ENCODE measurements at regions of chr12 and their contacts with region 1.

Region 1: DNA sequence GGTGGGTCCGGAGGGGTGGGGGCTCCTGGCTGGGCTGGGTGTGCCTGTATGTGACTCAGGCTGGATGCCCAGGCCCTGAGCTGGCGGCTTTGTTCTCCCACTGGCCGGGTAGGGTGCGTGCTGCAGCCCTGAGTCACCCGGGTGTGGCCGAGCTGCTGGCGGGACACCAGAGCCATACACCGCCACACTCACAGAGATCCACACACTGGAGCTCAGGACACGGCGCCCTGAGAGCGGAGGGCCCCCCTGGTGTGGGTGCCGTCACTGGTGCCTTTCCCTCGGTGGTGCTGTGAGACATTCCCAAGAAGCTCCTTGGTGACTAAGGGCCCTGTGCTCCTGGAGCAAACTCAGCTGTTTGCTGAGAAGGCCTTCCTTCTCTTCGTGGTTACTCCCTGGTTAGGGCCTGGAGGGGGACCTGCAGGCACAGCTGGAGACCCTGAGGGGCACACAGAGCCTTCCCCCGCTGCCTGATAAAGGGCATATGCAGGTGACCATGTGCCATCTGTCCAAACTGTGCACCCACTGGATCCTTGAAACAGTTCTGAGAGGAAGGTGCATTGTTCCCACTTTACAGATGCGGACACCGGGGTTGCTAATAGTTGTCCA is 44.3 kb downstream of the KRT80 start:
- DNase-seq: peak; percentile 99
- ATAC-seq: peak; percentile 57
- H3K4me3 ChIP-seq: no peak overlapping the region
- H3K27ac ChIP-seq: peak overlapping the region; percentile 100
- H3K4me1 ChIP-seq: peaks cover 78% of the 10 kb centered on the region
- H3K27me3 ChIP-seq: no peaks in the 10 kb centered on the region
- CTCF ChIP-seq: no peak

Region 2: DNA sequence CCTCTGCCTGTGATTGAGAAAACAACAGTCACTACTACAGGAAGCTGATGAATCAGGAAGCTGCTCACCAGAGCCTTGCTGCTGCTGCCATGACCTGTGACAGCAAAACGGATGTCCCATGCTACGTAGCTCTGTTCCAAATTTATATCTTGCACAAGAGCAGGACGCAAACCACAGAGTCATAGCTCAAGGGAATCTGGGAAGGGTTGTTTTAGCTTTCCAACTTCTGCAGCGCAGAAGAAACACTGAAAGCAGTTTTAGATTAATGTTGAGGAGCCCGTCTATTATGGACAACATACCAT is 261.5 kb before region 1 on chr12:
- CTCF ChIA-PET with region 1: no interaction called
- POLR2A ChIA-PET with region 1: no interaction called
- intact Hi-C with region 1: no loop called
- DNase-seq: peak; percentile 83
- ATAC-seq: peak; percentile 95
- H3K4me3 ChIP-seq: no peak overlapping the region
- H3K27ac ChIP-seq: peak overlapping the region; percentile 34
- H3K4me1 ChIP-seq: peaks cover 7% of the 10 kb centered on the region; the same call in 1 of the 2 replicates
- H3K27me3 ChIP-seq: no peaks in the 10 kb centered on the region
- CTCF ChIP-seq: no peak

Region 3: DNA sequence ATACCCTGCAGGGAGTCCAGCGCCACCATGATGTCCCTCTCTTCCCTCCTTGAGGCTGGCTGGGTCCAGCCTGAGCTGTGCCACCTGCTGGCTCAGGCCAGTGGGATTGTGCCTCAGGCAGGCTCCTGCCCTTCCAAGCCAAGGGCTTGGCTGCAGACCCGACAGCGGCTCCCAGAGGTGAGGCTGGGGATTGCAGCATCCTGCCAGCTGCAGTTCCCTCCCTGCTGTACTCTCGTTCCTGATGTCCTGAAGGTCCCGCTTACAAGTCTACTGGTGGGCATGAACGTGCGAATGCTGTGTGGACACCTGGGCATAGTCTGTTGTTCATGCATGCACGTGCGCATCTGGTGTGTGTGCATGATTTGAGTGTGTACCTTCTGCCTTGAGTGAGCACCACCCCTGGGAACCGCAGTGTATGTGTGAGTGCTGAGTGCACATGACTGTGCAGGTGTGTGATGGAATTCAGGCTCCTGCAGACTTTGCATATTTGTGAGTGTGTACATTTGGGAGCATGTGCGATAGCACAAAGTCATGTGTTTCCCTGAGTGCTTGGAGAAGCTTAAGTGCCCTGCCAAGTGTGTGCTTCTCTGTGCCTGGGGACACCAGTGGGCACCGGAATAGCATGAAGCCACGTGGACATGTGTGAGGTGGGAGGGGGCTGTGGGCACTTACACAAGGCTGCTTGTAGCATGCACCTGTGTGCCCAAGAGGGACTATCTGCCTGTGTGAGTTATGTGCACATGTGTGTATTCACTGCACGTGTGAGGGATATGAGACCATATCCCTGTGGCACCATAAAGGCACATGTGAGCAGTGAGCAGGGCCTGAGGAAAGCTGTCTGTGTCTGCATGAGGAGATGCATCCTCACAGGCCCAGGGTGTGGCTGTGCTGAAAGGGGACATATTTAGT is 66.3 kb after region 1 on chr12:
- CTCF ChIA-PET with region 1: no interaction called
- POLR2A ChIA-PET with region 1: interaction called, 12 read pairs
- intact Hi-C with region 1: no loop called
- DNase-seq: peak; percentile 96
- ATAC-seq: peak; percentile 56
- H3K4me3 ChIP-seq: no peak overlapping the region
- H3K27ac ChIP-seq: peak overlapping the region; percentile 72
- H3K4me1 ChIP-seq: peaks cover 61% of the 10 kb centered on the region
- H3K27me3 ChIP-seq: no peaks in the 10 kb centered on the region
- CTCF ChIP-seq: peak; percentile 99

Region 4: GRCh38 chr12:52442600-52443061 is 295.2 kb after region 1 on chr12:
- CTCF ChIA-PET with region 1: no interaction called
- POLR2A ChIA-PET with region 1: no interaction called
- intact Hi-C with region 1: loop called (anchors 5 kb)
- DNase-seq: peak; percentile 99
- ATAC-seq: peak; percentile 64
- H3K4me3 ChIP-seq: peak overlapping the region; percentile 11; the same call in 1 of the 2 replicates
- H3K27ac ChIP-seq: peak overlapping the region; percentile 95
- H3K4me1 ChIP-seq: peaks cover 72% of the 10 kb centered on the region
- H3K27me3 ChIP-seq: no peaks in the 10 kb centered on the region
- CTCF ChIP-seq: peak; percentile 56

Region 5: DNA sequence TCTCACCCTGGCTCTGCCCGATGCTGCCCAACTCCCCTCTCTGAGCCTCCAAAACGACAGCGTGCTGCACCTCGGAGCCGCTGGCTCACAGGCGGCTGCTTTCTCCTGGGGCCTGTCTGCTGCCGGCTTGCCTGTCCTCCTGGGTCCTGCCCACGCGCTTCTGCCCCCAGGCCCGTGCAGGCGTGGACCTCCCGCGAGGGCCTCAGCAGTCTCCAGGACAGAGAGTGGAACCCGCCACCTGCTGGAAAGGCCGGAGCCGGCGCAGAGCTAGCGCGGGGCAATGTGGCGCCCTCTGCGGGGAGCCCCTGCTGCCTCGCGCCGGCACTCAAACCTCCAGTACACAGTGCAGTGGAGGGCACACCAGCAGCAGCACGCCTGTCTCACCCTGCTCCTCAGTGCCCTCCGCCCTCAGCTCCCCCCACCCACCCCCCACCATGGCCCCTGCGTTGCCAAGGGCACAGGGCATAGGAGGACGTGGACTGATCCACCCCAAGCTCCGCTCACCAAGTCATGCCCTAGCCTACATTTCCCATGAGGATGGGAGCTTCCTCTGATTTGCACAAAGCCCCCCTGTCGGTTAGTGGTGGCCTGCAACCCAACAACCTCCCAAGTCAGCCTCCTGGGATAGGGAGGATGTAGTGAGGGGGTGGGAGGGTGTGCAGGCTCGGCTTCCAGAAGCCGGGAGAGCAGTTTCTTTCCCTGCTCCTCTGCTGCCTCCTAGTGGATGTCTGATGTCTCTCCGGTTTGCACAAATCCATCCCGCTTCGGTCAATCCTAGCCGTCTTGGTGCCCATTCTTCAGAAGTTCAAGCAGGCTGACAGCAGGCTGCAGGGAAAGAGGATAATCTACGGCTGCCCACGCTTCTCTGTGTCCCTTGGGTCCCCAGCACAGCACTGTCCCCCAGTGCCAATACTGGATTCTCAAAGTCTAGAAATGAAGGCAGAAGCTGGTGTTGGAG is 732.2 kb after region 1 on chr12:
- CTCF ChIA-PET with region 1: interaction called, 3 read pairs
- POLR2A ChIA-PET with region 1: interaction called, 12 read pairs
- intact Hi-C with region 1: loop called (anchors 5 kb)
- DNase-seq: peak; percentile 94
- ATAC-seq: peak; percentile 82
- H3K4me3 ChIP-seq: peak overlapping the region; percentile 54
- H3K27ac ChIP-seq: peak overlapping the region; percentile 52
- H3K4me1 ChIP-seq: peaks cover 28% of the 10 kb centered on the region
- H3K27me3 ChIP-seq: no peaks in the 10 kb centered on the region
- CTCF ChIP-seq: peak; percentile 71